H1 (cell line): ENCODE measurements at regions of chr10 and their contacts with region 1.

Region 1: DNA sequence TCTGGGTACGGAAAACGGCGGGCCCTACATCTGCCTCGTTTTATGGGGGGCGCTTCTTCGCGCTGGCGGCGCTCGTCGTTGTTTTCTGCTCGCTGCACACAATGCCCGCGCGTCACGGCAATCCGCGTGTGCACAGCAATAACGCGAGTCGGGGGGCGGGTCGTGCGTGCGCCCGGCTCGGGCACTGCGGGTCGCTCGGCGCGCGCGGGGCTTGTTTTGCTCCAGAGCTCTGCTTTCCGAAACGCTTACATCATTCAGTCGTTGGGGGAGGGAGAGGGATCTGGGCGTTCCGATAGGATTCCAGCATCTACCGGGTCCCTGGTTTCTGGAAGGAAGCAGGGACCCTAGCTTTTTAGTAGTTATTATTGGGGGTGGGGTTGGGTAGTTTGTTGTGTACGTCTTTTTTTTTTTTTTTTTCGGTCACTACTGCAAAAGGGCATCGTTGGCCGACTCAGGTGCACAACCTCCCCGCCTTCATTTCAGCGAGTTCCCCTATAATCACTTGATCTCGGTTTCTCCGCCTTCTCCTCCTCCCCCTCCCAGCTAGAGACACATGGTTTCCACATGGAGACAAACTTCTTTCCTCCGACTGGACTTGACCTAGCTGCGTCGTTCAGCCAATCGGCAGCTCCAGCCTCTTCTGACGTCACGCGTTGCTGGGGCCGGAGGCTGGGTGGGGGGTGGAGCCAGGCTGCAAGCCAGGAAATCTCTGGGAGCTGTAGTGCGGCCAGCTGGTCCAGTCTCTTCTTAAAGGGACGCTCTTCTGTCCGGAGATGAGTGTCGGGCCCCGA is 3.5 kb downstream of the MXI1 start:
- DNase-seq: peak; percentile 93 to 97
- H3K4me3 ChIP-seq: peak overlapping the region; percentile 73 to 80 (median 78)
- H3K27ac ChIP-seq: peak overlapping the region; percentile 2; the same call in 1 of the 2 replicates
- H3K4me1 ChIP-seq: peaks cover 1 to 20% (median 14%) of the 10 kb centered on the region in 4 experiments; a peak in 6 of 7 replicates
- H3K27me3 ChIP-seq: peaks cover 18 to 67% (median 49%) of the 10 kb centered on the region in 4 experiments
- CTCF ChIP-seq: no peak
- EP300 ChIP-seq: 0 out of 3 replicates have a peak, but pooled peaks of 1 of the 2 experiments have one; percentile 30
- POLR2A ChIP-seq: peak; percentile 47 to 59
- RAD21 ChIP-seq: no peak

Region 2: GRCh38 chr10:110151467-110151866 is 59.4 kb before region 1 on chr10:
- CTCF ChIA-PET with region 1: interaction called, 46 read pairs
- POLR2A ChIA-PET with region 1: no interaction called
- DNase-seq: peak in 1 of 2 experiments; percentile 43
- H3K4me3 ChIP-seq: no peak overlapping the region
- H3K27ac ChIP-seq: no peak overlapping the region
- H3K4me1 ChIP-seq: no peaks in the 10 kb centered on the region; a peak in 3 of 7 replicates
- H3K27me3 ChIP-seq: no peaks in the 10 kb centered on the region; a peak in 2 of 7 replicates
- CTCF ChIP-seq: no peak
- EP300 ChIP-seq: no peak
- POLR2A ChIP-seq: no peak
- RAD21 ChIP-seq: no peak

Region 3: GRCh38 chr10:110176141-110177030 is 34.5 kb before region 1 on chr10:
- CTCF ChIA-PET with region 1: interaction called, 22 read pairs
- POLR2A ChIA-PET with region 1: interaction called, 7 read pairs
- DNase-seq: no peak
- H3K4me3 ChIP-seq: no peak overlapping the region
- H3K27ac ChIP-seq: no peak overlapping the region
- H3K4me1 ChIP-seq: peaks cover 7 to 17% (median 12%) of the 10 kb centered on the region in 4 experiments
- H3K27me3 ChIP-seq: peaks cover 11 to 58% (median 42%) of the 10 kb centered on the region in 4 experiments
- CTCF ChIP-seq: no peak
- EP300 ChIP-seq: no peak
- POLR2A ChIP-seq: no peak
- RAD21 ChIP-seq: no peak

Region 4: GRCh38 chr10:110225756-110226542 is 15.1 kb after region 1 on chr10:
- CTCF ChIA-PET with region 1: interaction called, 333 read pairs
- POLR2A ChIA-PET with region 1: interaction called, 121 read pairs
- DNase-seq: peak; percentile 79 to 95
- H3K4me3 ChIP-seq: peak overlapping the region; percentile 61 to 86 (median 66)
- H3K27ac ChIP-seq: no peak overlapping the region; the same call in 1 of the 2 replicates
- H3K4me1 ChIP-seq: peaks cover 0 to 13% (median 6%) of the 10 kb centered on the region in 4 experiments; a peak in 6 of 7 replicates
- H3K27me3 ChIP-seq: peaks cover 0 to 2% (median 0%) of the 10 kb centered on the region in 4 experiments; a peak in 1 of 7 replicates
- CTCF ChIP-seq: peak; percentile 67 to 79 (median 70)
- EP300 ChIP-seq: no peak
- POLR2A ChIP-seq: no peak
- RAD21 ChIP-seq: peak; percentile 36 to 56

Region 5: DNA sequence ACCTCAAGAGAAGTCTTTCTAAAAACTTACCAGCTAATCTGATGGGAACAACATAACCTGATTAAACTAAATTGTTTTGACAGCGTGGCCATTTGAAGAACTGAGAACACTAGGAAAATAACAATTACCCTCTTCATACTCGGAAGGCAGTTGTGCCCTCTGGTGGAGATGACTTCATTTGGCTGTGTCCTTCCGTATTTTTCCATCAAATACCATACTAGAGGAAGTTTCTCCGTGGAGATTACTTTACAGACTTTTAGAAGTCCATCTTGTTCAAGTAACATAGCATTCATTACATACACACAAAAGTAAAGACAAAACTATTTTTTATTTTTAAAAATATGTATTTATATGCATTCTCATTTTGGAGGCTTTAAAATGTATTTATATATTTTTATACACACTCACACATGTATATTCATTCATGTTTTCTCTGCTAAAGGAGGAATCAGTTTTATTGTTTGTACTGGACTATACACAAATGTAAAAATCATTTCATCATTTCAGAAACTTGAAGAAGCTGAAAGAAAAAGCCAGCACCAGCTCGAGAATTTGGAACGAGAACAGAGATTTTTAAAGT is 68.6 kb after region 1 on chr10:
- CTCF ChIA-PET with region 1: interaction called, 47 read pairs
- POLR2A ChIA-PET with region 1: no interaction called
- DNase-seq: no peak
- H3K4me3 ChIP-seq: no peak overlapping the region
- H3K27ac ChIP-seq: no peak overlapping the region
- H3K4me1 ChIP-seq: no peaks in the 10 kb centered on the region
- H3K27me3 ChIP-seq: no peaks in the 10 kb centered on the region
- CTCF ChIP-seq: peak in 2 of 3 experiments; percentile 70 to 72; a peak in 3 of 4 replicates
- EP300 ChIP-seq: no peak
- POLR2A ChIP-seq: no peak
- RAD21 ChIP-seq: peak; percentile 83 to 86